ENCODE measurements at regions of chr13 and their contacts with region 1.

Region 1: DNA sequence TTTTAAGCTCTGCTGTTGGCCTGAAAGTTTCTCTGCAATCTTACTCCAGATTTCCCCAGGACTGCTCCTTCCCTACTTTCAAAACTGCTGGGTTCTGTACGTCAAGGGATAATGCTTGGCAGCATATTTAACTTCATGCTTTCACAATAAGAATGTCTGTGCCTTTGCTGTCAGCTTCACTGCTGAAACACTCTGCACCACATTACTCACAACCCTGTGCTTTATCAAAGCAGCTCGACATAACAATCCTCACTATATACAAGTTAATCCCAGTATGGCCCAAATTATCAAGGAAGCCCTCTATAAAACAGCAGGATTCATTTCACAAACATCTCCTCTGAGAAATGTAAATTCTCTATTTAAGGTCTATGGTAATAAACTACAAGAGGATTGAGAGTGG is 17.5 kb downstream of the LATS2 start:
- DNase-seq: no peak
- ATAC-seq: no peak
- H3K4me3 ChIP-seq: no peak overlapping the region
- H3K27ac ChIP-seq: no peak overlapping the region
- H3K4me1 ChIP-seq: peaks cover 0 to 3% of the 10 kb centered on the region in 2 donors
- H3K27me3 ChIP-seq: no peaks in the 10 kb centered on the region

Region 2: DNA sequence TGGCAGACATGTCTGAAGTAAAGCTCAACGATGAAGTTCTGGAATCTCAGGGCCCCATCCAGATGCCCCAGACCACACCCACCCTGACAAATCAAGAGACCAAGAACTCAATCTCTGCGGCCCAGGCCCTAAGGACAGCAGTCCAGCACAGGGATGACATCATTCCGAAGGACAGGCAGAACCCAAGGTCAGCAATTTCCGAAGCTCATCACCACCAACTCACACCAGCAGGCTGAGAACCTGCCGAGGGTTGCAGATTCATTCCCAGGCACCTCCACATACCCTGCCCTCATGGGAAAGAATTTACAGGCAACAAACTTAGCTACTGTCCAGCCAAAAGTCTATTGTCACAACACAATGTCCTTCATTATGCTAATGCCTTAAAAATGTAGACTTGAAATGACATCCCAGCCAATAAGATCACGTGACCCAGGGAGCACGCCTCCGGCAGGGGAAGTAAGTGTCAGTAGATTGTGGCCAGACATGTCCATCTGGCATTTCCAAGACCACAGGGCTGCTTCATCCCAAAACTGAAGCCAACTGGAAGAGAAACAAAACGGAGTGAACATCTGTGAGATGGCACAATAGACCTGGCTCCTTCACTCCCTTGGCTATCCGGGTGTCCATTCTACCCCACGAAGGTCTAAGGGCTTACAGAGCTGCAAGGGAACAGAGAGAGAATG is 617.0 kb before region 1 on chr13:
- intact Hi-C with region 1: no loop called
- DNase-seq: no peak
- ATAC-seq: no peak
- H3K4me3 ChIP-seq: no peak overlapping the region
- H3K27ac ChIP-seq: no peak overlapping the region
- H3K4me1 ChIP-seq: no peaks in the 10 kb centered on the region
- H3K27me3 ChIP-seq: no peaks in the 10 kb centered on the region

Region 3: GRCh38 chr13:20997430-20998161 is 46.3 kb before region 1 on chr13:
- intact Hi-C with region 1: loop called in 1 of 2 experiments (anchors 10 kb)
- DNase-seq: peak in 1 of 2 donors; percentile 71
- ATAC-seq: peak; percentile 30
- H3K4me3 ChIP-seq: no peak overlapping the region
- H3K27ac ChIP-seq: peak overlapping the region in 1 of 2 donors; percentile 71
- H3K4me1 ChIP-seq: no peaks in the 10 kb centered on the region
- H3K27me3 ChIP-seq: no peaks in the 10 kb centered on the region

Region 4: GRCh38 chr13:21014502-21015170 is 29.3 kb before region 1 on chr13:
- intact Hi-C with region 1: loop called in 1 of 2 experiments (anchors 5 kb)
- DNase-seq: peak in 1 of 2 donors; percentile 74
- ATAC-seq: peak; percentile 72
- H3K4me3 ChIP-seq: no peak overlapping the region
- H3K27ac ChIP-seq: peak overlapping the region in 1 of 2 donors; percentile 35
- H3K4me1 ChIP-seq: peaks cover 3 to 9% of the 10 kb centered on the region in 2 donors
- H3K27me3 ChIP-seq: no peaks in the 10 kb centered on the region

Measured in aorta (tissue), 5 donors.